Ascending aorta (tissue), 2 donors: ENCODE measurements at regions of chr3 and their contacts with region 1.

Region 1: DNA sequence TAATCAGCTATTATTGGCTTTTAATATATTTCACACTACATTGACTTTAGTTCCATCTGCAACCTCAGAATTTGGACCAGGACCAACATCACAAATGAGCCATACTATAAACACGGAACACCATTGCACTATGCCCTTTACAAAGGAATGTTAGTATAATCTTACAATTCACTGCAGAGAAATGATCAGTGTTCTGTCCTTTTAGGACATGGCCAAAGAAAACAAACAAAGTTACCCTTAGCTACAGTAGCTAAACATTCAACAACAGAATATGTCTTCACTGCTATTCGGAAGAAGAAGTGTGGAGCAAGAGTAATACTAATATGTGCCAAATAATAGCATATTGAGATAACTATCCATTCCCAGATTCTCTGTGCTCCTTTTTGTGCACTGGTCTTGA is 90.4 kb downstream of the NAALADL2 start:
- DNase-seq: no peak
- H3K4me3 ChIP-seq: no peak overlapping the region
- H3K27ac ChIP-seq: peak overlapping the region; percentile 24 to 43
- H3K4me1 ChIP-seq: peaks cover 5 to 7% of the 10 kb centered on the region in 2 donors
- H3K27me3 ChIP-seq: no peaks in the 10 kb centered on the region
- CTCF ChIP-seq: no peak

Region 2: DNA sequence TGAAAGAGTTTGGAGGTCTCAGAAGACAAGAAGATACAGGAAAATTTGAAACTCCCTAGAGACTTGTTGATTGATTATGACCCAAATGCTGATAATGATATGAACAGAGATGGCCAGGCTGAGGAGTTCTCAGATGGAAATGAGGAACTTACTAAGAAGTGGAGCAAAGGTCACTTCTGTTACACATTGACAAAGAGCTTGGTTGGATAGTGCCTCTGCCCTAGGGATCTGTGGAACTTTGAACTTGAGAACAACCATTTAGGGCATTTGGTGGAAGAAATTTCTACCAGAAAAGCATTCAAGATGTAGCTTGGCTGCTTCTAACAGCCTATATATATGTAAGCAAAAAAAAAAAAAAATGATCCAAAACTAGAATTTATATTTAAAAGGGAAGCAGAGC is 139.3 kb before region 1 on chr3:
- intact Hi-C with region 1: no loop called
- DNase-seq: no peak
- H3K4me3 ChIP-seq: no peak overlapping the region
- H3K27ac ChIP-seq: no peak overlapping the region
- H3K4me1 ChIP-seq: no peaks in the 10 kb centered on the region
- H3K27me3 ChIP-seq: no peaks in the 10 kb centered on the region
- CTCF ChIP-seq: no peak

Region 3: GRCh38 chr3:175208330-175208729 is 258.8 kb after region 1 on chr3:
- intact Hi-C with region 1: loop called (anchors 10 kb)
- DNase-seq: no peak
- H3K4me3 ChIP-seq: no peak overlapping the region
- H3K27ac ChIP-seq: no peak overlapping the region
- H3K4me1 ChIP-seq: no peaks in the 10 kb centered on the region
- H3K27me3 ChIP-seq: no peaks in the 10 kb centered on the region
- CTCF ChIP-seq: no peak